ENCODE measurements at regions of chr15 and their contacts with region 1.

Region 1: DNA sequence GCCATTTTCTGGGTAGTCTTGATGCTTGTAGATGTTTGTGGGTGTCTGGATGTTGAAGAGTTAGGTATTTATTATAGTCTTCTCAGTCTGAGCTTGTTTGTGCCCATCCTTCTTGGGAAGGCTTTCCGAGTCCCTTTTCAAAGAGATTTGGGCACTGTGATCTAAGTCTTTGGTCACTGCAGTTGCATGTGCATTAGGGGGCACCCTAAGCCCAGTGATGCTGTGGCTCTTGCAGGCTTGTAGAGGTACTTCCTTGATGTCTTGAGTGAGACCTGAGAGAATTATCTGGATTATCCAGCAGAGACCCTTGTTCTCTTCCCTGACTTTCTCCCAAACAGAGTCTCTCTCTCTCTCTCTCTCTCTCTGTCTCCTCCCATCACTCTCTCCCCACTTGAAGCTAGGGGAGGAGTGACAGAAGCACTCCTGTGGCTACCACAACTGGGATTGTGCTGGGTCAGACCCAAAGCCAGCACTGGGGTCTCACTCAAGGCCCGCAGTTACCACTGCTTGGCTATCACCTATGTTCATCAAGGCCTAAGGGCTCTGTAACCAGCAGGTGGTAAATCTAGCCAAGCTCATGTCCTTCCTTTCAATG is 68.5 kb downstream of the TMCO5A start:
- DNase-seq: peak; percentile 62
- H3K4me3 ChIP-seq: no peak overlapping the region
- H3K27ac ChIP-seq: no peak overlapping the region
- H3K4me1 ChIP-seq: no peaks in the 10 kb centered on the region
- H3K27me3 ChIP-seq: no peaks in the 10 kb centered on the region
- CTCF ChIP-seq: peak; percentile 74 to 88

Region 2: DNA sequence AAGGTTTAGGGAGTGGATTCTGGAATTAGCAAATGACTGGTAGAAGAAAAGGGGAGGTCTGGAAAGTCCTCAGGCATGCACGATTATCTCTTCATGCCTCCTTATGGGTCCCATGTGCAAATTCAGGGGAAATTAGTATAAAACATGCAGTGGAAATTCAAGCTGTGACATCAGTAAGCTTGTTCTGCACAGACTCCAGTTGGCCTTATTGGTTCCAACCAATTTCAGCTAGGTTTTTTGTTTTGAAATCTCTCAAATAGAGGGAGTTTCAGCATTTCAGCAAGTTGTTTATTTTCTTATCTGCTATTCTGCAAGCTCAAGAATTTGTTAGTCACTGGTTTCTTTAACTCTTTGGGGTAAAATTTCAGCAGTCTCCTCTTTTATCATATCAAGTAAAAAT is 69.3 kb before region 1 on chr15:
- CTCF ChIA-PET with region 1: no interaction called
- dilution Hi-C with region 1: loop called (anchors 5 kb)
- in situ Hi-C with region 1: no loop called
- intact Hi-C with region 1: no loop called
- DNase-seq: no peak
- H3K4me3 ChIP-seq: no peak overlapping the region
- H3K27ac ChIP-seq: no peak overlapping the region
- H3K4me1 ChIP-seq: no peaks in the 10 kb centered on the region
- H3K27me3 ChIP-seq: peaks cover 5% of the 10 kb centered on the region
- CTCF ChIP-seq: no peak

Region 3: GRCh38 chr15:38072348-38073177 is 69.6 kb after region 1 on chr15:
- CTCF ChIA-PET with region 1: no interaction called
- dilution Hi-C with region 1: no loop called
- in situ Hi-C with region 1: no loop called
- intact Hi-C with region 1: loop called (anchors 1 kb)
- DNase-seq: peak; percentile 88
- H3K4me3 ChIP-seq: peak overlapping the region; percentile 25 to 50 (median 49)
- H3K27ac ChIP-seq: peak overlapping the region; percentile 92
- H3K4me1 ChIP-seq: peaks cover 72% of the 10 kb centered on the region
- H3K27me3 ChIP-seq: no peaks in the 10 kb centered on the region
- CTCF ChIP-seq: peak in 1 of 2 donors; percentile 46

Region 4: DNA sequence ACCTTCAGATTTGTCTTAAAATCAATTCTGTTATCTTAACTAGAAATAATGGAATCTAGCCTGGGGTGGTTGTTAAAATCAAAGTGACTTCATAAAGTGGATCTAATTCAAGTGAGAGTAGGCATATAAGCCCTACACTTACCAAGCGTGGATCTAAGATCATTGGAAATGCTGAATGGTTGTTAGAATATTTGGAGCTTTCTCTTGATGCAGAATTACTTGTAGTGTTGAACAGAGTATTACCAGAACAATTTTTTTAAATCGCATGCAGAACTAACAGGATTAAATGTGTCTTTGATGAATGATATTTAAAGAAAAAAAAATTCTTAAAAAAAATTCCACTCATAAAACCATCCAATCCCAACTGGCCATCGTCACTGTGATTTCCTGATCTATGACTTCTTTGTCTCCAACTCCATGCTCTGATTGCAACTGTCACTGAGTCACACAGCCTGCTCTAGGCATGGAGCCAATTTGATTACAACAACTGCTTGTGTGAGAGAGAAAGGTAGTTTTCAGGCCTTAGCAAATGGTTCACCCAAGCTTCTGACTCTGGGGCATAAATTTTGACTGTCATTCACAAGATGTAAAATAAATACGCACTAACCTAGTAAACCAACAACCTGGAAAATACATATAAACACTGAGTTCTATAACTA is 223.8 kb after region 1 on chr15:
- CTCF ChIA-PET with region 1: no interaction called
- dilution Hi-C with region 1: no loop called
- in situ Hi-C with region 1: no loop called
- intact Hi-C with region 1: no loop called
- DNase-seq: peak; percentile 96
- H3K4me3 ChIP-seq: no peak overlapping the region
- H3K27ac ChIP-seq: peak overlapping the region; percentile 51
- H3K4me1 ChIP-seq: peaks cover 13% of the 10 kb centered on the region
- H3K27me3 ChIP-seq: no peaks in the 10 kb centered on the region
- CTCF ChIP-seq: no peak

Region 5: DNA sequence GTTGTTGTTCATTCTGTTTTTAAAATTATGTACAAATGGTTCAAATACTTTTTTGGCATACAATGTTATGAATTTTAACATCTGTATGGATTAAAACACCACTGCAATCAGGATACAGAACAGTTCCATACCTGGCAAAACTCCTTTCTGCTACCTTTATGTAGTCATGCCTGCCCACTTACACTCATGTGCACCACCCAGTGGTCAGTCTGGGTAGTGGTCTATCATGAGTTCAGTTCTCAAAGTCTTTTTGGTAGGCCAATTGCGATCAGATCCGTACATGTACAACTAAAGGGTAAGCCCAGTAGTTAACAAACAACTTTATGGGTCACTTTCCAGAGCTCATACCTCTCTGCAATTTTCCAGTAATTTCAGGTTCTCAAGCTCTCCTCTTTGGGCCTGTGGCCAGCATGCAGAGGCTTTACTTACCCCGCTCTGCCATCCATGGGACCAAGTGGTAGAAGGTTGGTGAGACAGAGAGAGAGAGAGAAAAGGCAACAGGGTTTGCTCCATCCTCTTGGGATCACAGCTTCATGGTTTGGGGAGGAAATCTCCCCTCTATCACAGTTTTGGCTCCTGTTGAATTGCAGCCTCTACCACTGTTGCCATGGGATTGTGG is 387.1 kb after region 1 on chr15:
- CTCF ChIA-PET with region 1: no interaction called
- dilution Hi-C with region 1: no loop called
- in situ Hi-C with region 1: loop called in 1 of 2 experiments (anchors 10 kb)
- intact Hi-C with region 1: loop called (anchors 1 kb)
- DNase-seq: peak; percentile 47
- H3K4me3 ChIP-seq: no peak overlapping the region
- H3K27ac ChIP-seq: no peak overlapping the region
- H3K4me1 ChIP-seq: no peaks in the 10 kb centered on the region
- H3K27me3 ChIP-seq: no peaks in the 10 kb centered on the region
- CTCF ChIP-seq: peak; percentile 89 to 95

Region 6: DNA sequence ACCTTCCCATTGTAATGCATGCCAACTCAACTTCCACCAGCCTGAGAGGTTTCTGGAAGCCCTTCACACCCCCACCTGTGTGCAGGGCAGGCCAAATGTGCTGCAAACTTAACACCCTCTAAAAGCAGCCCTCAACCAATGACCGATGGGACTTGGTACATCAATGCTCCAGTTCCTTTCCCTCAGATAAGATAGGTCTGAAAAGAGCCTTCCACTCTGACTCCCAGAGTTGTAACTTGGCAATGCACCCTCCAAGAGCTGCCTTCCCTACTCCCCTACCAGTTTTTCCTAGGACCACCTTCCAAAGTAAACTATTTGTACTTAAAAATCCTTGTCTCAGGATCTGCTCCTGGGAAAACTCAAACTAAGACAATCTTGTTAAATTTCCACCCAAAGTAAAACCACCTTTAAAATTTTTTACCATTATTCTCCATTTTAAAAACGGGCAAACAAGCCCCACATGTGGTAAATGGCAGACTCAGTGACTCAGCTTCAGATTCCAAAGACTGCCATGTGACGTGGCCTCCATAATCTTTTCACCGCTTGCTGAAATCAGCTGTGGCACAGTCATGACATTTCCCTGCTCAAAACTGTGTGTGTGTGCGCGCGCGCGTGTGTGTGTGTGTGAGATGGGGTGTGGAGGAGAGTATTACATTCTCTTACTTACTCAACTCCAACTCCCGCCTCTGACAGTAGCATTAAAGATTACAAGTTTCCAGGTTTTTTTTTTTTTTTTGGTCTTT is 544.4 kb after region 1 on chr15:
- CTCF ChIA-PET with region 1: no interaction called
- dilution Hi-C with region 1: no loop called
- in situ Hi-C with region 1: no loop called
- intact Hi-C with region 1: loop called (anchors 5 kb)
- DNase-seq: no peak
- H3K4me3 ChIP-seq: no peak overlapping the region
- H3K27ac ChIP-seq: no peak overlapping the region
- H3K4me1 ChIP-seq: peaks cover 5% of the 10 kb centered on the region
- H3K27me3 ChIP-seq: no peaks in the 10 kb centered on the region
- CTCF ChIP-seq: no peak